ENCODE measurements at regions of chr12 and their contacts with region 1.

Region 1: DNA sequence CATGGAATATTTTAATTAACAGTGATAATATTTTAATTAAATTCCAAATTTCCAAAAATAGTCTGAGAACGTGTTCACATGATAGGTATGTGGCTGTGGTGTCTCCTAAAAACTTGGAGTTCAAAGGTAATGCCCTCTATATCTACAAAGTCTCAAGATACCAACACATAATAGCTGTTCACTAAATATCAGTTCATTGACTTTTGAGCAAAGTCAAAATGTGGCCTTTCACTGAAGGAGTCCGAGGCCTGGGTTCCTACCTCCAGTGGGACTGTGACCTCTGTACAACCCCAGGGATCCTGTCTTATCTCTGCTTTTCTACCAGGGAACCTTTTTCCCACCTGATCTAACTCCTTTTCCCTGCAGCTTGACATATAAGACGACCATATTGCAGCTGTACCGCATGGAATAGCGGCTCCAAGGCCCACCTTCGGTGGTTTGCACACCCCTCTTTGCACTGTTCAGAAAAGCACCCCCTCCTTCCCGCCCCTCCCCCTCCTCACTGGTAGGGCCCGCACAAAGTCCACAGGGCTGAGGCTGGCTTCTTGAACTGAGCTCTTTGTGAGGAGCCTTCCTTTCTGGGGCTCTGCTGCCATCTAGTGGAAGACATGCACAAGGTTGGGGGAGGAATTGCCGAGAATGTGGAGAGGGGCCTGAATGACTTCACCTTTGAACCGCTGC is 3.1 kb downstream of the CCND2 start:
- DNase-seq: peak; percentile 57 to 73
- H3K4me3 ChIP-seq: no peak overlapping the region
- H3K27ac ChIP-seq: no peak overlapping the region
- H3K4me1 ChIP-seq: no peaks in the 10 kb centered on the region
- H3K27me3 ChIP-seq: peaks cover 89% of the 10 kb centered on the region
- CTCF ChIP-seq: peak; percentile 98

Region 2: DNA sequence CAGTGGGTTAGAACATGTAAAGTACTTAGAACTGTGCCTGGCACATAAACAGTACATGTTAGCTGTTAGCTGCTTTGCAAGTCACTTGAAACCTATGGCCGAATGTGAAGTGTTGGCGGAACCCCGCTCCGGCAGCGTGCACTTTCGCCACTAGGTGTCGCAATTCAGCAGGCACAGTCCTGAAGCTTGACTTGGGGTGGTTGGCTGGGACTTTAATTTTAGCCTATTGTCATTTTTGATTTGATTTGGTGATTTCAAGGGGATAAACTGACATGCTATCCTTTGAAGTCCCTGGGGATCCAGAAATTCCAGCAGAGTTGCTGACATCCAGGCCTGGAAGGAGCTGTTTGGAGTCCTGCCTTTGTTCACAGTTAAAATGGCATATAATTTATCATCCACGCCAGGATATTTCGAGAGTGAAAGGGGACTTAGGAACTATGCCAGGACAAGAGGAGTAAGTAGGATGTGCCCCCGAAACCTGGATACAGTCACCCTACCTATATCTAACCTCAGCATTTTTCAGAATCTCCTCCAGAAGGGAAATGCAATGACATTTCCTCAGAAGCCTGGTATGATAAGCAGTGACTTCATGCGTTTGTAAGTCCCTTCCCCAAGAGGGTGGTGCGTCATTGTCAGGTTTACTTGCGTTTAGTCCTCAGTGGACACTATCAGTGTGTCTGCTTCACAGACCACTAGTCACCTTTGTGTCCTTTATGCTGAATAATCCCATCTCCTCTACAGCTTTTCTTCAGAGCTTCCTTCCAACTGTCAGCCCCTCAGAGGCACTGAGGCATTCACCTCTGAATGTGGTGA is 1203.0 kb before region 1 on chr12:
- CTCF ChIA-PET with region 1: no interaction called
- POLR2A ChIA-PET with region 1: no interaction called
- intact Hi-C with region 1: loop called (anchors 10 kb)
- DNase-seq: peak; percentile 67 to 88
- H3K4me3 ChIP-seq: no peak overlapping the region
- H3K27ac ChIP-seq: no peak overlapping the region
- H3K4me1 ChIP-seq: peaks cover 6% of the 10 kb centered on the region
- H3K27me3 ChIP-seq: no peaks in the 10 kb centered on the region
- CTCF ChIP-seq: peak; percentile 99

Region 3: DNA sequence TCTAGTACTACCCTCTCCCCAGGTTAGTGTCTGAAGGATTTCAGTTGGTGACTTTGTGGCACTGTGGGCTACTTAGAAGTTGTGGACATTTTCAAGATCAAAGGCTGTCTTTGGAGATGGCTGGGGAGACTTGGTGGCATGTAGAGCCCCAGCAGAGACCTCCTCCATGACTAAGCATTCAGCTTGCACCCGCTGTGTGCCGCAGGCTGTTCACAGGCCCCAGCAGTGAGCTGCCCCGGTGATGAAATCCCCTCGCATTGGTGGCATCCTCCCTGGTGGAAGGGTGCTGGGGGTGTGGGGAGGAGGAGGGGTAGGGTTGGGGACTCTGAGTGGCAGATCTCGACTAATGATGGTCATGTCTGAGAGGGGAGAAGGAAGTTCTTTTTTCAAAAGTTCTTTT is 1025.6 kb before region 1 on chr12:
- CTCF ChIA-PET with region 1: interaction called, 15 read pairs
- POLR2A ChIA-PET with region 1: no interaction called
- intact Hi-C with region 1: no loop called
- DNase-seq: no peak
- H3K4me3 ChIP-seq: no peak overlapping the region
- H3K27ac ChIP-seq: no peak overlapping the region
- H3K4me1 ChIP-seq: no peaks in the 10 kb centered on the region
- H3K27me3 ChIP-seq: peaks cover 11% of the 10 kb centered on the region; the same call in 1 of the 2 replicates
- CTCF ChIP-seq: no peak

Region 4: DNA sequence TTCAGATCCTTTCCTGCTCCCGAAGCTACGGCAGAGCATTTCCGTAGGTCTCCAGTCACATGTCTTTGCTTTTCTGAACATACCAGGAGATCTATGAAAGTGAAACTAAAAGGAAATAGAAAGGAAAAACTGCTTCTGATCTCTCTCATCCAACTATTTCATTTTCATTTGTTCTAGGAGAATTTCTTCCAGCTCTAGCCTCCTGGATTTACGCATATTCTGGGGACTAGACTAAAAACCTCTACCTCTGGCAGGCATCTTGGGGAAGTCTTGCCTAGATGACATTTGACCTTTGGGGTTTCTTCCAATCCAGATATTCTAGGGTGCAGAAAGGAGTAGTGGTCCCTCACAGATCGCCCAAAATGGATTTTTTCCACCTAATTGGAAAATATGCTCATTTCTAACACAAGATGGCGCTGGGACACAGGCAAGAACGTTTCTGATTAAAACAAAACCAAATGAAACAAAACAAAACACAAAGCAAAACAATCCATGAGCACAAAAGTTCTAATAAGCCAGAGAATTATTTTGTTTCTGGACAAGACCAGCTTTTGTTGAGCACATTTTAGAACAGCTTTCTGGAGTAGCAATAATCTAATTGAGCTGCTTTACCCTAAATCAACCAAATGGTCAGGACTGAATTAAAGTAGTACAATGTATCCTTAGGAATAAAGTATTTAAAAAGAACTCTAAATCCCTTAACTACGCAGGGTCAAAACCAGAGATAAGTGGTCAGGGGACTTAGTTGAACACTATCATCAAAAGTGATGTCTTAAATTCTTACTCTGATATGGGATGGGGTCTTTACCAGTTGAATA is 391.2 kb before region 1 on chr12:
- CTCF ChIA-PET with region 1: interaction called, 19 read pairs
- POLR2A ChIA-PET with region 1: no interaction called
- intact Hi-C with region 1: loop called (anchors 1 kb)
- DNase-seq: peak in 1 of 2 experiments; percentile 10
- H3K4me3 ChIP-seq: no peak overlapping the region
- H3K27ac ChIP-seq: no peak overlapping the region
- H3K4me1 ChIP-seq: no peaks in the 10 kb centered on the region
- H3K27me3 ChIP-seq: peaks cover 38% of the 10 kb centered on the region
- CTCF ChIP-seq: peak; percentile 91

Region 5: GRCh38 chr12:4107436-4107878 is 169.2 kb before region 1 on chr12:
- CTCF ChIA-PET with region 1: no interaction called
- POLR2A ChIA-PET with region 1: no interaction called
- intact Hi-C with region 1: loop called (anchors 1 kb)
- DNase-seq: no peak
- H3K4me3 ChIP-seq: no peak overlapping the region
- H3K27ac ChIP-seq: no peak overlapping the region
- H3K4me1 ChIP-seq: no peaks in the 10 kb centered on the region
- H3K27me3 ChIP-seq: peaks cover 64% of the 10 kb centered on the region
- CTCF ChIP-seq: peak; percentile 54

Region 6: GRCh38 chr12:4538207-4539160 is 261.8 kb after region 1 on chr12 and contains the start of gene RAD51AP1:
- CTCF ChIA-PET with region 1: no interaction called
- POLR2A ChIA-PET with region 1: no interaction called
- intact Hi-C with region 1: no loop called
- DNase-seq: peak; percentile 93 to 96
- H3K4me3 ChIP-seq: peak within 1 kb of the TSS; percentile 77
- H3K27ac ChIP-seq: peak within 1 kb of the TSS; percentile 41; the same call in 1 of the 2 replicates
- H3K4me1 ChIP-seq: peaks cover 20% of the 10 kb centered on the region
- H3K27me3 ChIP-seq: no peaks in the 10 kb centered on the region
- CTCF ChIP-seq: no peak
- total RNA-seq, gene RAD51AP1: 50.1 and 54.7 TPM in 2 replicates